ENCODE measurements at regions of chr11 and their contacts with region 1.

Region 1: DNA sequence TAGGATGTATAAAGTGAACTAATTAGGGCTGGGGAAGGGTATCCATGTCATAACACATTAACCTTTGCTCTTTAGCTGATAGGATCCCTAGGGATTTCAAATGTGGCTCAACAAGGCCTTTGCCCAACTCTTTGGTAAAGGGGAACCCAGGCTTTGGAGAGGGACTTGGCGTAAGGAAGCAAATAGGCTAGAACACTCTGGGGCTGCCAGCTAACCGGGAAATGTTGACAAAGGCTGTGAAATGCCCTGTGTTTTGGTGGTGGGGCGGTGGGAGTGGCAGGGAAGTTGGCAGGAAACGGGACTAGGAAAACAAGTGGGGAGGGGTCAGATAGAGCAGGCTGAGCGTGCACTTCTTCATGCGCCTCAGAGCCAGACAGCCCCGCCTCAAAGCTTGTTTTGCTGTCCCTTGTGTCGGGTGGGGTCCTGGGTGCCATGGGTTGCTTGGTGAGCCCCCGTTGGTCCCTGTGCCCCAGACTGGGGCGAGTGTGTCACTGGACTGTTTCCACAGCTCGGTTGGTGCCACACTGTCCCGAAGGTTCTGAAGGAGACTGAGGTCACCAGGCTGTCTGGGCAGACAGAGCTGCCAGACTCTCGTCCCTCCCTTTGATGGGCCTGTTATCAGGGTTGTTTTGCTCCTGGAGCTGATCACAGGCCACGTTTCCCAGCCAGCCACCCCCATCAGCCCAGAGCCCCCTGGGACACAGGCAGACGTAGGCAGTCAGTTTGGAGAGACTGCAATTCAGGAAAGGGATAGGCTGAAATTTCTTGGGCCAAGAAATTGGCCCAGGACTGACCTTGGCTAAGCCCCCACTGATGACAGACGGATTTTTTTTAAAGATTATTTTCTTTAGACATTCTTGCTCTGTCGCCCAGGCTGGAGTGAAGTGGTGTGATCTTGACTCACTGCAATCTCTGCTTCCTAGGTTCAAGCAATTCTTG is 19.6 kb downstream of the KCTD21 start:
- DNase-seq: no peak
- H3K4me3 ChIP-seq: no peak overlapping the region
- H3K4me3 Mint-ChIP-seq: no peak overlapping the region
- H3K27ac Mint-ChIP-seq: no peak overlapping the region
- H3K4me1 ChIP-seq: no peaks in the 10 kb centered on the region
- H3K4me1 Mint-ChIP-seq: peaks cover 8% of the 10 kb centered on the region
- H3K27me3 ChIP-seq: no peaks in the 10 kb centered on the region
- H3K27me3 Mint-ChIP-seq: no peaks in the 10 kb centered on the region
- CTCF ChIP-seq: no peak

Region 2: DNA sequence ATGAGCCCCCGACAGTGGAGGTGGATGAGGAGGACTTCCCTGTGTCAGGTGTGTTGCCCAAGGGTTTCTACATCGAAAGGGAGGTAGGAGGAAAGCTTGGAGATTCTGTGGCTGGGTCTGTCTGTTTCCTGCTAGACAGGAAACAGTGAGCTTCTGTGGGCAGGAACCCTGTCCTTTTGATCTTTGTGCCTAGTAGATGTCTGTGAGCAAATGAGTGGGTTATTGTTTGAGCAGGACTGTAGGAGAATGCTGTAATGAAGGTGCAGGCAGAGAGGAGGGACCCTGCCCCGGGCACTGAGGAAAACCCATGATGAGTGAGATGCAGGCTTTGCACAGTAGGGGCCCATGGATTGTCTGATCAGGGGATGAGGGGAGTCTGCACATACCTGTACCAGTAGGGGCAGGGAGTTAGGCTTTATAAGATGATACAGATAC is 33.9 kb after region 1 on chr11:
- CTCF ChIA-PET with region 1: no interaction called
- POLR2A ChIA-PET with region 1: no interaction called
- intact Hi-C with region 1: loop called (anchors 2 kb)
- DNase-seq: peak in 1 of 2 experiments; percentile 38
- H3K4me3 ChIP-seq: no peak overlapping the region
- H3K4me3 Mint-ChIP-seq: no peak overlapping the region
- H3K27ac Mint-ChIP-seq: peak overlapping the region; percentile 12
- H3K4me1 ChIP-seq: peaks cover 15% of the 10 kb centered on the region; the same call in 1 of the 2 replicates
- H3K4me1 Mint-ChIP-seq: peaks cover 6% of the 10 kb centered on the region
- H3K27me3 ChIP-seq: no peaks in the 10 kb centered on the region
- H3K27me3 Mint-ChIP-seq: no peaks in the 10 kb centered on the region
- CTCF ChIP-seq: no peak

Measured in Caco-2 (cell line).